ENCODE measurements at regions of chr12 and their contacts with region 1.

Region 1: DNA sequence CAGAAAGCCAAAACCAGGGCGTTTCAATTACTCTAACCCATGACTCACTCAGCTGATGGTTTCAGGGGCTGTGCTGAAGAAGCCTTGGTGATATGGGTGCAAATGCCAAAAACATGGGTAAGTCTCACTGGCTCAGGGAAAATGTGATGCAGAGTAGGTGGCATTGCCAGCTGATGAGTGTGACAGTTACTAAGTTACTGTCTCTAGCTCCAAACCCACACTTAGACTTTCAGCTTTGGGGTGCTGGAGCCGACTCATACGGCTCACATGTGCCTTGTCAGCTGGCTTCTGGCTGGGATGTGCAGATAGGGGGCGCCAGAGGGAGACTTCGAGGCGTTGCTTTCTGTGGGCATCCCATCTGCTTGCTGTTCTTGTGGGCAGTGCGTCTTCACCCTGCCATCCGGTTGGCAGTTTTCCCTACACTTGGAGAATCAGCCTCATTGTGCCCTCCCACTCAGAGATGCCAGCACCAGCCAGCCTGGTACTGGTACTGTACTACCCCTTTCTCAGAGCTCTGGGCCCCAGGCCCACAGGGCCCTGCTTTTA is 11.1 kb upstream of the KRT7 start:
- DNase-seq: peak; percentile 88
- H3K4me3 Mint-ChIP-seq: no peak overlapping the region
- H3K27ac Mint-ChIP-seq: no peak overlapping the region
- H3K4me1 Mint-ChIP-seq: peaks cover 5% of the 10 kb centered on the region
- H3K27me3 Mint-ChIP-seq: peaks cover 65% of the 10 kb centered on the region

Region 2: GRCh38 chr12:52210186-52210940 is 11.6 kb before region 1 on chr12:
- CTCF ChIA-PET with region 1: interaction called, 23 read pairs
- DNase-seq: no peak
- H3K4me3 Mint-ChIP-seq: no peak overlapping the region
- H3K27ac Mint-ChIP-seq: no peak overlapping the region
- H3K4me1 Mint-ChIP-seq: no peaks in the 10 kb centered on the region
- H3K27me3 Mint-ChIP-seq: peaks cover 81% of the 10 kb centered on the region

Region 3: GRCh38 chr12:52235822-52236692 is 14.1 kb after region 1 on chr12:
- CTCF ChIA-PET with region 1: interaction called, 24 read pairs
- DNase-seq: no peak
- H3K4me3 Mint-ChIP-seq: no peak overlapping the region
- H3K27ac Mint-ChIP-seq: no peak overlapping the region
- H3K4me1 Mint-ChIP-seq: no peaks in the 10 kb centered on the region
- H3K27me3 Mint-ChIP-seq: peaks cover 82% of the 10 kb centered on the region

Region 4: DNA sequence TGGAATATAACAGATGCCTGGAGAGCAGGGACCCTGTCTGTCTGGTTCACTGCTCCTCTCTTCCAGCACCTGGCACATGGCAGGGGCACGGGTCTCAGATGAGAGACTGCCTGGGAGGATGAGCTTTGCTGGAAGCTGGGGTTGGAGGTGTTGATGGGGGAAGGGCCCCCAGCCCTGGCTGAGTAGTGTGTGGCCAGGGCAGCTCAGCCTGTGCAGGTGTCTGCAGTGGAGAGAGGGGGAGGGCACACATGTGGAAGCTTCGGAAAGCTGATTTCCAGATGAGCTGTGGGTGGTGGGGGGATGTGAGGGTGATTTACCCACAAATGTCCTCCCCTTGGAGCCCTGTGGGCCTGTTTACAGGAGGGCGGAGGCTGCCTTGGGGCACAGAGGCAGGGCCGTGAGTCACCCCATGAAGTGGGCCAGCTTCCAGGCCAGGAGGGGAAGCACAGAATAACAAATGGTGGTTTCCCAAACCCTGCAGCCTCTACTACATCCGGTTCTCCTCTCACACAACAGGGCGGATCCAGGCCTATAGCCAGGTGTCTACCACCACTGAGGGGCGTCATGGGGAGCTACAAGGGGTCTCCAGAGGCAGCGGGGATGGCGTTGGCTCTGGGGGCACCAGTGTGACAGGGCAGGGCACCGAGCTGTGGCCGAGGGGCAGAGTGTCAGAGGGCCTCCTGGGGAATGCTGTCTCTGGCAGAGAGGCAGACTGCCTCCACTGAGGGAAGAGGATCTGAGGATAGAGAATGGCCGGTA is 22.1 kb after region 1 on chr12:
- CTCF ChIA-PET with region 1: interaction called, 24 read pairs
- DNase-seq: peak; percentile 77
- H3K4me3 Mint-ChIP-seq: peak overlapping the region; percentile 43
- H3K27ac Mint-ChIP-seq: peak overlapping the region; percentile 91
- H3K4me1 Mint-ChIP-seq: peaks cover 56% of the 10 kb centered on the region
- H3K27me3 Mint-ChIP-seq: peaks cover 29% of the 10 kb centered on the region

Region 5: GRCh38 chr12:52278541-52279421 is 56.8 kb after region 1 on chr12:
- CTCF ChIA-PET with region 1: interaction called, 89 read pairs
- DNase-seq: peak; percentile 80
- H3K4me3 Mint-ChIP-seq: no peak overlapping the region
- H3K27ac Mint-ChIP-seq: no peak overlapping the region
- H3K4me1 Mint-ChIP-seq: peaks cover 9% of the 10 kb centered on the region
- H3K27me3 Mint-ChIP-seq: peaks cover 77% of the 10 kb centered on the region

Region 6: DNA sequence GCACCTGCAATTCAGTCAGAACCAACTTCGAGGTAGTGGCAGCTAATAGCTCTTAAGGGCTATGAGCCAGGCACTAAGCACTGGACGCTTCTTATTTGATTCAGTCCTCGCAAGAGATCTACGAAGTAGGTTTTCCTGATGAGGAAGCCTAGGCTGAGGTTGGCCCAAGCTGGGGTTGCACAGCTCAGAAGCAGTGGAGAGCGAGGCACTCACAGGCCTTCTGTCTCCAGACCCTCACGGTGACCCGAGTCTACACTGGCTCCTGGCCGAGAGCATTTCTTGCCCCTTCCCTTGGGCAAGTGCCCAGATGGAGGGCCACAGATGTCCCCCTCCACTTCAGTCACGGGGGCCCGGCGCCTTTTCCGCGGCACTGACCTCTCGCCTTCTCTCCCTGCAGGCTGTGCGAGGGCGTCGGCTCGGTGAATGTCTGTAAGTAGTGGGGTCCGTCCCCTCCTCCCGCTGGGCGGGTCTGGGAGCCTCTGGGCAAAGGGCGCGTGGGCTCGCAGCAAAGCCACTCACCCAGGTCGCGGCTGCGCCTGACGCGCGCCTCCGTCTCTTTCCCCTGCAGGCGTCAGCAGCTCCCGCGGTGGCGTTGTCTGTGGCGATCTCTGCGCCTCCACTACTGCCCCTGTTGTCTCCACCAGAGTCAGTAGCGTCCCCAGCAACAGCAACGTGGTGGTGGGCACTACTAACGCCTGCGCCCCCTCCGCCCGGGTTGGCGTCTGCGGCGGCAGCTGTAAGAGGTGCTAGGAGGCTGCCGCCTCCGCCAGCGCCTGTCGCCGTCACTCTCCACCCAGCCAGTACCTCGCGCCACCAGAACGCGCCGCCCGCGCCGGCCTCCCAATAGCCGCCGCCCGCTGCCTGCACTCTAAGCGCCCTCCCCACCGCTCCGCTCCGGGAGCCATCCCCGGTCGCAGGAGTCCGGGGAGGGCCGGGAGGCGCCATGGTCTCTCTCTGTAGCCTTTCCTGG is 86.1 kb after region 1 on chr12:
- CTCF ChIA-PET with region 1: interaction called, 23 read pairs
- DNase-seq: peak; percentile 68
- H3K4me3 Mint-ChIP-seq: peak overlapping the region; percentile 50
- H3K27ac Mint-ChIP-seq: no peak overlapping the region
- H3K4me1 Mint-ChIP-seq: peaks cover 28% of the 10 kb centered on the region
- H3K27me3 Mint-ChIP-seq: peaks cover 88% of the 10 kb centered on the region

Region 7: GRCh38 chr12:52327052-52327829 is 105.3 kb after region 1 on chr12:
- CTCF ChIA-PET with region 1: interaction called, 22 read pairs
- DNase-seq: peak; percentile 88
- H3K4me3 Mint-ChIP-seq: no peak overlapping the region
- H3K27ac Mint-ChIP-seq: no peak overlapping the region
- H3K4me1 Mint-ChIP-seq: peaks cover 9% of the 10 kb centered on the region
- H3K27me3 Mint-ChIP-seq: peaks cover 51% of the 10 kb centered on the region